ENCODE measurements at regions of chrX and their contacts with region 1.

Region 1: DNA sequence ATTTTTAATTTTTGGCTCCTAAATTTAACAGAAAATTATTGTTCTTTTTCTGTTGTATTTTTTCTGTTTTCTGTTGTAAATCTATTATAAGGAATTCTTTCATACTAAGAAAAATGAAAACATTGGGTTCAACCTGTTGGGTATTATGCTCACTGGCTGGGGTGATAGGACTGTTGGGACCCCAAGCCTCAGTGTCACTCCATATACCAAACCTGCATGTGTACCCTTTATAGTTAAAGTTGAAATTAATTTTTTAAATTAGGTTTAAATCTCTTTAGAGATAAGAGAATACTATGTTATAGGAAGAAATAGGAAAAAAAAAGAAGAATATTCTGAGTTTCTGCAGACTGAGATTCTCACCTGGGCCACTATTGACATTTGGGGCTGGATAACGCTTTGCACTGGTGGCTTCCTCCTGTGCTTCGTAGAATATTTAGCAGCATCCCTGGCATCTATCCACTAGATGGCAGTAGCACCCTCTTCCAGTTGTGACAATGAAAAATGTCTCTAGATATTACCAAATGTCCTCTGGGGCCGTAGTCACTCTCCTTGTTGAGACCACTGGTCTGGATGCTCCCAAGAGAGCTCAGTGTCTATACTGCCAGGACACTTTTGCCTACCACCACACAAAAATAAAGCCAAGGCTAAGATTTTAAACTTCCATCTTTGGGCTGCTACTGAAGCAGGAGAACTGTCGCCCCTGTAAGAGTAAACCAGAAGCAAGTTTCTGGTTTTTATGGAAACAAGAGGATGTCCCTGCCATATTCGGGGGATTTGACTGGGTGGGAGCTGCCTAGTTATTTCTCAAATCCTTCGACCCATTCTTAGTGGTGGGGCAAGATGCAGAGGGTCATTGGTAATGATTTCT is 22.4 kb upstream of the CLTRN start:
- DNase-seq: peak; percentile 64 to 78 (median 78)
- H3K4me3 ChIP-seq: no peak overlapping the region
- H3K4me3 Mint-ChIP-seq: no peak overlapping the region
- H3K27ac ChIP-seq: no peak overlapping the region
- H3K27ac Mint-ChIP-seq: peak overlapping the region; percentile 30 to 92 (median 66)
- H3K4me1 ChIP-seq: peaks cover 6% of the 10 kb centered on the region
- H3K4me1 Mint-ChIP-seq: peaks cover 7 to 27% (median 13%) of the 10 kb centered on the region in 4 donors
- H3K27me3 ChIP-seq: no peaks in the 10 kb centered on the region
- H3K27me3 Mint-ChIP-seq: no peaks in the 10 kb centered on the region

Region 2: GRCh38 chrX:15188039-15188438 is 499.0 kb before region 1 on chrX:
- CTCF ChIA-PET with region 1: no interaction called
- POLR2A ChIA-PET with region 1: no interaction called
- intact Hi-C with region 1: no loop called
- DNase-seq: no peak
- H3K4me3 ChIP-seq: no peak overlapping the region
- H3K4me3 Mint-ChIP-seq: no peak overlapping the region
- H3K27ac ChIP-seq: no peak overlapping the region
- H3K27ac Mint-ChIP-seq: no peak overlapping the region
- H3K4me1 ChIP-seq: no peaks in the 10 kb centered on the region
- H3K4me1 Mint-ChIP-seq: no peaks in the 10 kb centered on the region
- H3K27me3 ChIP-seq: no peaks in the 10 kb centered on the region
- H3K27me3 Mint-ChIP-seq: no peaks in the 10 kb centered on the region

Region 3: DNA sequence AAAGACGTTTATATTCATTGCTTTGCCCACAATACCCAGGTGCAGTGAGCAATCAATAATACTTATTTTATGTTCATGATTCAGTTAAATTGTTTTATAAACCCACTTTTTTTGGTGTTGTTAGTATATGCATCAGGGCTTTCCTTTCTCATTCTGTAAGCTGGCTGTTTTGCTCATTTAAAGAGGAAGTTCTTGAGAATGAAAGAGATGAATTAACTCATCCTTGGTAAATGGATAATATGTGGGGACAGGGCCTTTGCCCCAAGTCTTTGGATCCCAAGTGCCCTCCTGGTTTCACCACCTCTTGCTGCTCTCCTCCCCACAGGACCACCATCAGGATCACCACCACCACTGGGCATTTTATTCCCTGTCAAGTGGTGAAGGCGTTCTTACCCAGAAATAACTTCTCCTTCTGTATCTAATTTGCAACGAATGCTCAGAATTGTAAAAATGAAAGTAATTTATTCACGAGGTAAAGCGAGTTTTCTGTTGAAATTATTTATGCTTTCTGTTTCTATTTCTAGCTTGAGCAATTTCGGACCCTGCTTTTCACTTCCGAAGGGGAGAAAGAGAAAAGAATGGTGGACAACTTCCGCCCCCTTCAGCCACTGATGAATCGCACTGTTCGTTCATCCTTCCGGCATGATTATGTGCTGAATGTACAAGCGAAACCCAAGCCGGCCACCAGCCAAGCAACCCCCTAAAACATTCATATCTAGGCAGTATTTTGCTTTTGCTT is 95.1 kb after region 1 on chrX:
- CTCF ChIA-PET with region 1: interaction called, 11 read pairs
- POLR2A ChIA-PET with region 1: no interaction called
- intact Hi-C with region 1: no loop called
- DNase-seq: peak; percentile 14 to 40 (median 21)
- H3K4me3 ChIP-seq: peak overlapping the region in 1 of 2 donors; percentile 23
- H3K4me3 Mint-ChIP-seq: peak overlapping the region; percentile 76 to 95 (median 86)
- H3K27ac ChIP-seq: peak overlapping the region; percentile 70
- H3K27ac Mint-ChIP-seq: peak overlapping the region; percentile 89 to 98 (median 98)
- H3K4me1 ChIP-seq: peaks cover 15% of the 10 kb centered on the region
- H3K4me1 Mint-ChIP-seq: peaks cover 3 to 10% (median 9%) of the 10 kb centered on the region in 4 donors
- H3K27me3 ChIP-seq: no peaks in the 10 kb centered on the region
- H3K27me3 Mint-ChIP-seq: no peaks in the 10 kb centered on the region

Region 4: GRCh38 chrX:15789979-15790768 is 103.1 kb after region 1 on chrX and contains the start of gene ZRSR2:
- CTCF ChIA-PET with region 1: interaction called, 3 read pairs
- POLR2A ChIA-PET with region 1: no interaction called
- intact Hi-C with region 1: loop called (anchors 2 kb)
- DNase-seq: peak; percentile 91 to 95 (median 94)
- H3K4me3 ChIP-seq: peak within 1 kb of the TSS; percentile 65 to 76
- H3K4me3 Mint-ChIP-seq: peak within 1 kb of the TSS in 1 of 8 donors; percentile 18
- H3K27ac ChIP-seq: peak within 1 kb of the TSS; percentile 83
- H3K27ac Mint-ChIP-seq: peak within 1 kb of the TSS in 1 of 7 donors; percentile 68
- H3K4me1 ChIP-seq: peaks cover 37% of the 10 kb centered on the region
- H3K4me1 Mint-ChIP-seq: peaks cover 13 to 35% (median 24%) of the 10 kb centered on the region in 4 donors
- H3K27me3 ChIP-seq: no peaks in the 10 kb centered on the region
- H3K27me3 Mint-ChIP-seq: no peaks in the 10 kb centered on the region
- total RNA-seq, gene ZRSR2: 30.1 to 30.7 TPM

Region 5: GRCh38 chrX:15973299-15973698 is 286.2 kb after region 1 on chrX:
- CTCF ChIA-PET with region 1: no interaction called
- POLR2A ChIA-PET with region 1: no interaction called
- intact Hi-C with region 1: loop called (anchors 2 kb)
- DNase-seq: peak in 4 of 5 donors; percentile 1 to 13 (median 8)
- H3K4me3 ChIP-seq: no peak overlapping the region
- H3K4me3 Mint-ChIP-seq: no peak overlapping the region
- H3K27ac ChIP-seq: no peak overlapping the region
- H3K27ac Mint-ChIP-seq: no peak overlapping the region
- H3K4me1 ChIP-seq: no peaks in the 10 kb centered on the region
- H3K4me1 Mint-ChIP-seq: peaks cover 0 to 1% (median 0%) of the 10 kb centered on the region in 4 donors
- H3K27me3 ChIP-seq: no peaks in the 10 kb centered on the region
- H3K27me3 Mint-ChIP-seq: peaks cover 0 to 2% of the 10 kb centered on the region in 2 donors

Region 6: GRCh38 chrX:16123222-16123786 is 436.3 kb after region 1 on chrX and contains the start of gene GRPR:
- CTCF ChIA-PET with region 1: no interaction called
- POLR2A ChIA-PET with region 1: no interaction called
- intact Hi-C with region 1: loop called (anchors 10 kb)
- DNase-seq: peak; percentile 43 to 57 (median 43)
- H3K4me3 ChIP-seq: no peak within 1 kb of the TSS
- H3K4me3 Mint-ChIP-seq: peak within 1 kb of the TSS in 3 of 8 donors; percentile 49 to 63 (median 51)
- H3K27ac ChIP-seq: no peak within 1 kb of the TSS
- H3K27ac Mint-ChIP-seq: no peak within 1 kb of the TSS
- H3K4me1 ChIP-seq: no peaks in the 10 kb centered on the region
- H3K4me1 Mint-ChIP-seq: peaks cover 4 to 11% (median 7%) of the 10 kb centered on the region in 4 donors
- H3K27me3 ChIP-seq: no peaks in the 10 kb centered on the region
- H3K27me3 Mint-ChIP-seq: peaks cover 3 to 7% of the 10 kb centered on the region in 2 donors
- total RNA-seq, gene GRPR: 0.23 to 0.33 TPM

Region 7: GRCh38 chrX:16436348-16437188 is 749.5 kb after region 1 on chrX:
- CTCF ChIA-PET with region 1: no interaction called
- POLR2A ChIA-PET with region 1: no interaction called
- intact Hi-C with region 1: loop called (anchors 5 kb)
- DNase-seq: peak in 4 of 5 donors; percentile 43 to 52 (median 48)
- H3K4me3 ChIP-seq: no peak overlapping the region
- H3K4me3 Mint-ChIP-seq: no peak overlapping the region
- H3K27ac ChIP-seq: no peak overlapping the region
- H3K27ac Mint-ChIP-seq: no peak overlapping the region
- H3K4me1 ChIP-seq: peaks cover 13% of the 10 kb centered on the region
- H3K4me1 Mint-ChIP-seq: peaks cover 5 to 15% (median 11%) of the 10 kb centered on the region in 4 donors
- H3K27me3 ChIP-seq: no peaks in the 10 kb centered on the region
- H3K27me3 Mint-ChIP-seq: no peaks in the 10 kb centered on the region

Measured in CD4-positive, alpha-beta memory T cell (primary cell).